ENCODE measurements at regions of chr13 and their contacts with region 1.

Region 1: DNA sequence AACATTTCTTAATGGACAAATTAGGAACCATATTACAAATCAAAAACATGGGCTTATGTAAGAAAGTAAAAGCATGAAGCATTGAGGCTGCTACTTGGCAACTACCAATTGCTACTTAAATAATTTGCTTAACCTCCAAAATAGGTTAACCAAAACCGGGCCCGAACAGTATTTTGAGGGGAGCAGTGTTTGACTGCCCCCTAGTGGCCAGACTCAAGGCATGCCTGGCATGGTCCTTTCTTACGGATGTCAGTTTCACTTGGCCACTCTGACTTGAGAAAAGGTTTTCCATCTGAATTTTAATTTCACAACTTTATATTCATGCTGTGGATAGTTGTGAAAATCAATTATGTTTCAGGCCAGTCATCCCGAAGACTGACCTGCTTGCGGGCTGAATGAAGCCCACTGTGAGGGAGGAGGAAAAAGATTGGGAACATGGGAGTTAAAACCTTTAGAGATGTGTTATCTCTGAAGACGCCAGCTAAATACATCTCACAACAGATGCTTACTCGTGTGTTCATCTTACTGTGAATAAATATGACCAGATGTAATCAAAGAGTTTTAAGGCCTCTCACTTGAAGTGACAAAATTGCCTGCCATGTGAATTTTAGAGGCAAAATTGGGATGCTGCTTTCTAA is 2.9 kb downstream of the RXFP2 start:
- DNase-seq: peak; percentile 61 to 77
- H3K4me3 ChIP-seq: no peak overlapping the region
- H3K4me3 Mint-ChIP-seq: no peak overlapping the region
- H3K27ac Mint-ChIP-seq: no peak overlapping the region
- H3K4me1 ChIP-seq: no peaks in the 10 kb centered on the region
- H3K4me1 Mint-ChIP-seq: no peaks in the 10 kb centered on the region
- H3K27me3 ChIP-seq: no peaks in the 10 kb centered on the region
- H3K27me3 Mint-ChIP-seq: peaks cover 11% of the 10 kb centered on the region
- CTCF ChIP-seq: peak; percentile 96 to 97

Region 2: DNA sequence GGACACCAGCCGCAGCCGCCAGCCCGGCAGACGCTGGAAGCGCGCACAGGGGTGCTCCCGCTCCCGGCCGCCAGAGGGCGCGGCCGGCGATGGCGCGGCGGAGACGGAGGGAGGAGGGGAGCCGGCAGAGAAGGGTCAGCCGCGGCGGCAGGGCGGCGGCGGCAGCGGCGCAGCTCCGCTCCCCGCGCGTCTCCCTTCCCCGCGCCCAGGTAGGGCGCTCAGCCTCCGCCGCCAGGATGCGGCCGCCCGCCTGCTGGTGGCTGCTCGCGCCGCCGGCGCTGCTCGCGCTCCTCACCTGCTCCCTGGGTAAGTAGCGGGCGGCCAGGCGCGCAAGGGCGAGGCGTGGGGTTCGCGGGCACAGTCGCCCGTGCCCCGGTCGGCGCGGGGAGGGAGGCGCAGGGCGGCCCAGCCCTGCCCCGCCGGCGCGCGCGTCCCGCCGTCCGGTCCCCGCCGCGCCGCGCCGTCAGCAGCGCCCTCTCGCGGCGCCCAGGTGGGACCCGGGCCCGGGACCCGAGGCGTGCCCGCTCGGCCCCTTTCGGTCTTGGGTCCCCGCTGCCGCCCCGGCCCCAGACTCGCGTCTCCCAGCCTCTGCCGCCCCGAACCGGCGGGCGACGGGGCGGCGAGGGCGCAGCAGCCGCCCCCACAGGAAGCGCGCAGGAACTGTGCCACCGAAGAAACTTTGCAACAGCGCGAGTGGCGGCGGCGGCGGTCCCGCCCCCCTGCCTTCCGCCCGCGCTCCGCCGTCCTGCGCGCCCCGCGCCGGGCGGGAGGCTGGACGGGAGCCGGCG is 542.2 kb before region 1 on chr13 and contains the start of gene B3GLCT:
- CTCF ChIA-PET with region 1: no interaction called
- POLR2A ChIA-PET with region 1: no interaction called
- intact Hi-C with region 1: loop called (anchors 1 kb)
- DNase-seq: peak; percentile 79 to 94
- H3K4me3 ChIP-seq: peak within 1 kb of the TSS; percentile 77
- H3K4me3 Mint-ChIP-seq: peak within 1 kb of the TSS; percentile 77
- H3K27ac Mint-ChIP-seq: peak within 1 kb of the TSS; percentile 63
- H3K4me1 ChIP-seq: peaks cover 6% of the 10 kb centered on the region
- H3K4me1 Mint-ChIP-seq: peaks cover 14% of the 10 kb centered on the region
- H3K27me3 ChIP-seq: no peaks in the 10 kb centered on the region
- H3K27me3 Mint-ChIP-seq: no peaks in the 10 kb centered on the region
- CTCF ChIP-seq: peak; percentile 81 to 91
- total RNA-seq, gene B3GLCT: 4.5 TPM in 2 replicates

Region 3: GRCh38 chr13:31236211-31236786 is 505.9 kb before region 1 on chr13:
- CTCF ChIA-PET with region 1: no interaction called
- POLR2A ChIA-PET with region 1: no interaction called
- intact Hi-C with region 1: loop called (anchors 5 kb)
- DNase-seq: peak in 1 of 2 experiments; percentile 39
- H3K4me3 ChIP-seq: no peak overlapping the region
- H3K4me3 Mint-ChIP-seq: no peak overlapping the region
- H3K27ac Mint-ChIP-seq: no peak overlapping the region
- H3K4me1 ChIP-seq: no peaks in the 10 kb centered on the region
- H3K4me1 Mint-ChIP-seq: no peaks in the 10 kb centered on the region
- H3K27me3 ChIP-seq: no peaks in the 10 kb centered on the region
- H3K27me3 Mint-ChIP-seq: no peaks in the 10 kb centered on the region
- CTCF ChIP-seq: peak; percentile 74 to 82

Region 4: DNA sequence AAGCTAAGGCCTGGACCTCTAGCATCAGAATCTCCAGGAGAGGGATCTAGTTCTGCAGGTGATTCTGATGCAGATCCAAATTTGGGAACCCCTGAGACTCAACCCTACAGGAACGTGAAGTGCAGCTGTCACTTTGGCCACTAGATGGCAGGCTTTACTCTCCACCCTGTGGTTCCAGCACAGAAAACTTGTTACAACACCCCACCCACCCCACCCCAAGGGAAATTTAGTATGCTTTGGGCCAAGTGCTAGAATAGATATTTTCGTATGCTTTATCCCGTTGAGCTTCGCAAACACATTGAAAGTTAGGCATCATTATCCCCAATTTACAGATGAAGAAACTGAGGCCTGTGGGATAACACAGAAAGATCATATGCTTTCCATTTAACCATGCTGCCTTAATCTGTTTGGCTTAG is 310.5 kb before region 1 on chr13:
- CTCF ChIA-PET with region 1: no interaction called
- POLR2A ChIA-PET with region 1: no interaction called
- intact Hi-C with region 1: loop called (anchors 1 kb)
- DNase-seq: peak; percentile 63 to 67
- H3K4me3 ChIP-seq: no peak overlapping the region
- H3K4me3 Mint-ChIP-seq: no peak overlapping the region
- H3K27ac Mint-ChIP-seq: no peak overlapping the region
- H3K4me1 ChIP-seq: peaks cover 1% of the 10 kb centered on the region; the same call in 1 of the 2 replicates
- H3K4me1 Mint-ChIP-seq: peaks cover 1% of the 10 kb centered on the region
- H3K27me3 ChIP-seq: no peaks in the 10 kb centered on the region
- H3K27me3 Mint-ChIP-seq: peaks cover 3% of the 10 kb centered on the region
- CTCF ChIP-seq: peak; percentile 92 to 93

Region 5: GRCh38 chr13:31538067-31539042 is 203.9 kb before region 1 on chr13:
- CTCF ChIA-PET with region 1: interaction called, 9 read pairs
- POLR2A ChIA-PET with region 1: no interaction called
- intact Hi-C with region 1: loop called (anchors 1 kb)
- DNase-seq: peak in 1 of 2 experiments; percentile 44
- H3K4me3 ChIP-seq: no peak overlapping the region
- H3K4me3 Mint-ChIP-seq: no peak overlapping the region
- H3K27ac Mint-ChIP-seq: no peak overlapping the region
- H3K4me1 ChIP-seq: no peaks in the 10 kb centered on the region
- H3K4me1 Mint-ChIP-seq: no peaks in the 10 kb centered on the region
- H3K27me3 ChIP-seq: no peaks in the 10 kb centered on the region
- H3K27me3 Mint-ChIP-seq: no peaks in the 10 kb centered on the region
- CTCF ChIP-seq: peak; percentile 70 to 81

Region 6: DNA sequence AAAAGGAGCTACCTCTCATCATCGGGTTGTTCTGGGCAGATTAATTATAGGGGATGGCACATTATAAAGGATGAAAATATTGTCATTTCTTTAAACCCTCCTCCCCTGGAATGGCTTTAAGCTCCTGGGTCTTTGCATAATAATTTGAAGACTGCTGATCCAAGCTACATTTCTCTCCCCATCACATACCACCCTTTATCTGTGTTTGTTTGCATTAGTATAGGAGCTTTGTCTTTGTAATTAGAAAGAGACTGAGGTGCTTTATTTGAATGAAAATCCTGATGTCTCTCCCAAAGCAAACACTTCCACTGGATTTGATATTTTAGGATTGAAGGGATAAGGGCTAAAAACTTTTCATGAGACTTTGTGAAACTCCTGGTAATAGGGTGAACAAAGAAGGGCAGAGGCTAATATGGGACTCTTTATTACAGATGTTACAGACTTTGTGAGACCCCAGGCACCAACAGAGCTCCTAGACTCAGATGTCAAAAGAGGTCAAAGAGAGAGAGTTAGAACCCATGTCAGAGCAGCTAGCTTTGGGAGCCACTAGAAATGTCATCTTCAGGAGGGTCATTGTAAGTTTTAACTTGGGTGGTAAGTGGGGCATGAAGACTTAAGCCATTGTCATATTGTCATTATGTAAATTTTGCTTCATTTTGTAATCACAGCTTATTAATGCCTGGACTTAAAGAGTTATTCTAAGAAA is 78.2 kb before region 1 on chr13:
- CTCF ChIA-PET with region 1: no interaction called
- POLR2A ChIA-PET with region 1: no interaction called
- intact Hi-C with region 1: loop called (anchors 5 kb)
- DNase-seq: no peak
- H3K4me3 ChIP-seq: no peak overlapping the region
- H3K4me3 Mint-ChIP-seq: no peak overlapping the region
- H3K27ac Mint-ChIP-seq: no peak overlapping the region
- H3K4me1 ChIP-seq: no peaks in the 10 kb centered on the region
- H3K4me1 Mint-ChIP-seq: no peaks in the 10 kb centered on the region
- H3K27me3 ChIP-seq: no peaks in the 10 kb centered on the region
- H3K27me3 Mint-ChIP-seq: peaks cover 5% of the 10 kb centered on the region
- CTCF ChIP-seq: no peak

Region 7: GRCh38 chr13:32001185-32001768 is 259.1 kb after region 1 on chr13:
- CTCF ChIA-PET with region 1: no interaction called
- POLR2A ChIA-PET with region 1: no interaction called
- intact Hi-C with region 1: loop called (anchors 5 kb)
- DNase-seq: peak; percentile 54 to 67
- H3K4me3 ChIP-seq: no peak overlapping the region
- H3K4me3 Mint-ChIP-seq: no peak overlapping the region
- H3K27ac Mint-ChIP-seq: no peak overlapping the region
- H3K4me1 ChIP-seq: peaks cover 17% of the 10 kb centered on the region
- H3K4me1 Mint-ChIP-seq: peaks cover 22% of the 10 kb centered on the region
- H3K27me3 ChIP-seq: no peaks in the 10 kb centered on the region
- H3K27me3 Mint-ChIP-seq: no peaks in the 10 kb centered on the region
- CTCF ChIP-seq: peak; percentile 53 to 65

Measured in Caco-2 (cell line).